Posterior vena cava (tissue), 2 donors: ENCODE measurements at regions of chr2 and their contacts with region 1.

Region 1: DNA sequence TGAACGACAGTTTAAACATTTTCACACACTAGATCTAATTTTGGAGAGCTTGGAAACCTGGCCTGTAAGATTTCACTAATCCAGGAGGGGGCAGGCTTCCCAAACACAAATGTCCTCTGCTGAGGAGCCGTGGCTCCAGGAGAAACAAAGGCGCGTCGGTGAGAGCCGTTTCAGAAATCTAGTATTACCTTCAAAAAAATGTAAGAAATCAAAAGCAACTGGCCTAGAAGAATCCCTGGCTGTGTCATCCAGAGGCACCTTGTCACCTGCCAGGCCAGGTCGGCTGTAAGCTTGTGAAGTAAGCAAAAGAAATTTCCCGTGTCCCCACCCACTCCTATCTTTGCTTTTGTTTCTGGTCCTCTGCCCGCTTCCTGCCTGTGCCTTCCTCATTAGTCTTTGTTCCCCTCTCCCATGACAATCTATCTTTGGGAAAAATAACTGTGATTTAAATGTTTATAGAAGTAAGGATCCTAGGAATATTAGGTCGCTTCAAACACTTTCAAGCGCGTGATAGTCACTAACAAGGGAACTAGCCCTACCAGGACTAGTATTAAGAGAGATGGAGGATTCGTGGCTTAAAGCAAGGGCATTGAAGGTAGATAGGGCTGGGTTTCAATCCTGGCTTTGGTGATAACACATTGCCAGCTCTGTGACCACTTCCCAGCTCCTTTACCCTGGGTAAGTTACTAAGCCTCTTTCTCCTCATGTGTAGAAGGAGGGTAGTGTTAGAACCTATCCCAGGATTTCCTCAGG is 99.5 kb upstream of the STK39 start:
- DNase-seq: no peak

Region 2: DNA sequence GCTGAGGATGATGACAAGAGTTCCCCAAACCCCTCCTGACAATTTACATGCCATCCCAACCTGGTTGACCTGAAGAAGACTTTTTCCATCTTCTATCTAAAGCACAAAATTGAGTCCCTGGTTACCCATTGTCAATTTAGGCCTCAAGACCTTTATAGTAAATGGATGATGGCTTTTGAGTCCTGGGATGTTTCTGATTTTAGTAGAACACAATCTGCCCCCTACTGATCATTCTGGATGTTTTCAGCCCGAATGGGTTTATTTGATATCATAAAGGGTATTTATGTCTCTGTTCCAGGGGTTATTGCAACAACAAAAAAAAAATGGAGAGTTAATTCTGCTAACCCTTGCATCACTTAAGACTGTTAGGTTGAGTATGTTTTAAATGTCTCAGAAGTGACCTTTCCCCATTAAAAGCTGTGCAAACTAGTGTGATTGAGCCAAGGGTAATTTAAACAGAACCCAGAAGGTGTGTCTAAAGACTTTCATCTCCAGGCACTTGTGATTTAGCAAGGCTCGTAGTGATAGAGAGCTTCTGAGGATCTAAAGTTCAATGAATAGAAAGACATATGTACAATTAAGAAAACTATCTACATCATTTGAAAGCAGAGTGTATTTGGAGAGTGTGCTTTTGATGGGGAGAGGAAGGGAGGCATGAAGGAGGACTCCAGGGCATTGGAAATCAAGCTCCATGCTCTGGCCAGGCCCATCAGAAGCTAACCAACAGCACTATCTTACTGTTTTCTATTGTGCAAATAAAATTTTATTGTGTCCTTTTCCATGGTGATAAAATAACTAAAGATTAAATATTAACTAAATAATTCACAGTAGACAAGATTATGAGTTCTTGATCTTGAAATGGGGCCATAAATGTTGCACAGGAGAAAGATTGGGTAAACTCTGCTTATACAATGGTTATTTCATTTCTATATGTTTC is 358.9 kb after region 1 on chr2:
- intact Hi-C with region 1: loop called (anchors 10 kb)
- DNase-seq: no peak

Region 3: DNA sequence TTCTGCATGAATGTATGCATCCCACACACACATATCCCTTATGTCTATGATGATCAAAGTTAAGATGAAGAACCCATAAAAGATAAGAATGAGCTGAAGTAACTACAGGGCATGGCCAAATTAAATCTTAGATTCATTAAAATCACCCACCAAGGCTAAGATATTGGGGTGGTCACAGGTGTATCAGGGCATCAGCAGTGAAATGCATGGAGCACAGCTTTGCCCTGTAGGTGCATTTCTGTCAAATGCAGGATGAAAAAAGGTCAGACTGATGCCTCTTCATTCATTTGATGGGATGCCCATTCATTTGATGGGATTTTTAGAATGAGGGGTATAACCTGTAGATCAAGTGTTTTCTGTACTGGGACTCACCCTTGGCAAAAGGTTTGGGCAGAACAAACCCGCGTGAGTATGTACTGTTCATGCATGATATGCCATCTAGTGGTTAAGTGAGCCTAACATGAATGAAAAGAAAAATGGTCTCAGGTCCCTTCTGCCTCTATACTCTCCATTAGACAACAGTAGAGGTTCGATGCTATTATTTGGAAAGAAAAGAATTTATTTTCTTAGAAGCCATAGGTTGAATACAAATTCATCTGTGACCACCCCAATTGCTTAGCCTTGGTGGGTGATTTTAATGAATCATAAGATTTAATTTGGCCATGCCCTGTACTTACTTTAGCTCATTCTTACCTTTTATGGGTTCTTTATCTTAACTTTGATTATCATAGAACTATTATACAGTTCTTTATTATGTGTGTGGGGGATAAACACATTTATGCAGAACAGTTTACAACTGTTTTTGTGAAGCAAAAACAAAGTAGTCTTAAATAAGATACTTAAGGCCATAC is 412.3 kb after region 1 on chr2:
- intact Hi-C with region 1: loop called (anchors 10 kb)
- DNase-seq: no peak

Region 4: GRCh38 chr2:168766600-168766999 is 419.7 kb after region 1 on chr2:
- intact Hi-C with region 1: loop called in 1 of 2 experiments (anchors 10 kb)
- DNase-seq: no peak